ENCODE measurements at regions of chr11 and their contacts with region 1.

Region 1: DNA sequence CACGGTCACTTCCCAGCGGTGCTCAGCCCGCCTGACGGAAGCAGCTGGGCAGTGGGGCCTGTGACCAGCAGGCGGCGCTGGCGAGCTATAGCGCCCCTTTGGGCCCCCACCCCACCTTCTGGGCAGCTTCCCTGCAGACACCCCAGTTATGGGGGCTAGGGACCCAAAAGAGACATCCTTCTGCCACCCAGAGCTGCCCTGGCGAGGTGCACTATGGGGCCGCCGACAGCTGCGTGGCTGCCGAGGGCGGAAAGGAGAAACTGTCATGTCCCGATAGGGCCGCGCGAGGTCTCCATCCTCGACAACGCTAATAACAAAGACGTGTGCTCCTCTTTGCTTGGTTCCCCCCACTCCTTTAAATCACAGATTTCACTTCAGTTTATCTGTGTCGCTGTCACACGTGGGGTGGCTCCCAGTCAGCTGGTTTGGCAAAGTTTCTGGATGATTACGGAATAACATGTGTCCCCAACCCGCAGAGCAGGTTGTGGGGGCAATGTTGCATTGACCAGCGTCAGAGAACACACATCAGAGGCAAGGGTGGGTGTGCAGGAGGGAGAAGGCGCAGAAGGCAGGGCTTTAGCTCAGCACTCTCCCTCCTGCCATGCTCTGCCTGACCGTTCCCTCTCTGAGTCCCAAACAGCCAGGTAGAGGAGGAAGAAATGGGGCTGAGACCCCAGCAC is 674 bp upstream of the MYO7A start:
- DNase-seq: peak; percentile 62 to 74
- ATAC-seq: peak; percentile 65 to 86 (median 83)
- H3K4me3 ChIP-seq: peak overlapping the region; percentile 24
- H3K4me3 Mint-ChIP-seq: no peak overlapping the region
- H3K27ac ChIP-seq: no peak overlapping the region
- H3K27ac Mint-ChIP-seq: no peak overlapping the region
- H3K4me1 ChIP-seq: peaks cover 17% of the 10 kb centered on the region
- H3K4me1 Mint-ChIP-seq: peaks cover 0 to 16% of the 10 kb centered on the region in 2 donors
- H3K27me3 ChIP-seq: peaks cover 11% of the 10 kb centered on the region
- H3K27me3 Mint-ChIP-seq: peaks cover 9 to 12% of the 10 kb centered on the region in 2 donors
- CTCF ChIP-seq: peak; percentile 96

Region 2: DNA sequence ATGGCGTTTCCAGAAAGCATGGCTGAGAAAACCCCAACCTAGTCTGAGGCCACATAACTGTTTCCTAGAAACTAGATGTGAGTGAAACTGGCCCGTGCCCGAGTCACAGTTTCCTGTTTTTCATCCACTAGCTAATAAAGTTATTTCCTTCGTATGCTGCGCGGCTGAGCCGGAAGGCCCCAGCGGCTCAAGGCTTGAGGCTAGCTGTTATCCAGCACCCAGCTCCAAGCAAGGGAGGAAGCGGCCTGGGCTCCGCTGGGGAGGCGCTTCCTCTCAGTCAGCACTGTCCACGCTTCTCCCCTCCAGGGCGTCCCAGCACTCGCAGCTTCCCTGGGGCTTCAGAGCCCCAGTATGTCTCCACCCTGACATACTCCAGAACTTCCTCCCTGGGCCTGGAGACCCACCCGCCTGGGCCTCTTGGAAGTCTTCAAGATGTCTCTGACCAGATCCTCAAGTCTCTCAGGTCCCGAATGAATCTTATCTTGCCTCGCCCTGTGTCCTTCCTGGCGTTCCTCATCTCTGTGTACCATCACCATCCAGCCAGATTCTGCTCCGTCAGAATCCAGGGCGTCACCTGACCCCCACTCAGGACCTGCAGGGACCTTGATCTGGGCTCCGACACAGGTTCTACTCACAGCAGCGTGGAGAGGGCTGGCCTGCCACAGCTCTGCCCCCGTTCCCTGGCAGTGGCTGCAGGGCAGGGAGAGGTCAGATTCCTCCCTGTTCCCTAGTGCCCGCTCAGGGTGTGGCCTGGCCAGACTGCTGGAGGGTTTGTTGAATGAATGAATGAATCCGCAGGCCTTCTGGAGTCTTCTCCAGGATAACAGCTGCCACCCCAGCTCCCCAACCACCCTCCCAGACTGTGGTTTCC is 538.7 kb before region 1 on chr11:
- intact Hi-C with region 1: no loop called
- DNase-seq: peak in 1 of 2 donors; percentile 29
- ATAC-seq: peak in 2 of 3 donors; percentile 31 to 57
- H3K4me3 ChIP-seq: no peak overlapping the region
- H3K4me3 Mint-ChIP-seq: no peak overlapping the region
- H3K27ac ChIP-seq: no peak overlapping the region
- H3K27ac Mint-ChIP-seq: peak overlapping the region in 1 of 2 donors; percentile 62
- H3K4me1 ChIP-seq: peaks cover 10% of the 10 kb centered on the region
- H3K4me1 Mint-ChIP-seq: peaks cover 5 to 10% of the 10 kb centered on the region in 2 donors
- H3K27me3 ChIP-seq: no peaks in the 10 kb centered on the region
- H3K27me3 Mint-ChIP-seq: peaks cover 0 to 2% of the 10 kb centered on the region in 2 donors
- CTCF ChIP-seq: no peak

Region 3: GRCh38 chr11:76835928-76836612 is 291.3 kb before region 1 on chr11:
- intact Hi-C with region 1: no loop called
- DNase-seq: no peak
- ATAC-seq: no peak
- H3K4me3 ChIP-seq: no peak overlapping the region
- H3K4me3 Mint-ChIP-seq: no peak overlapping the region
- H3K27ac ChIP-seq: no peak overlapping the region
- H3K27ac Mint-ChIP-seq: no peak overlapping the region
- H3K4me1 ChIP-seq: no peaks in the 10 kb centered on the region
- H3K4me1 Mint-ChIP-seq: no peaks in the 10 kb centered on the region
- H3K27me3 ChIP-seq: no peaks in the 10 kb centered on the region
- H3K27me3 Mint-ChIP-seq: peaks cover 14 to 38% of the 10 kb centered on the region in 2 donors
- CTCF ChIP-seq: no peak

Region 4: GRCh38 chr11:77619576-77620198 is 492.3 kb after region 1 on chr11:
- intact Hi-C with region 1: loop called (anchors 2 kb)
- DNase-seq: peak in 1 of 2 donors; percentile 69
- ATAC-seq: peak in 1 of 3 donors; percentile 40
- H3K4me3 ChIP-seq: no peak overlapping the region
- H3K4me3 Mint-ChIP-seq: no peak overlapping the region
- H3K27ac ChIP-seq: no peak overlapping the region
- H3K27ac Mint-ChIP-seq: no peak overlapping the region
- H3K4me1 ChIP-seq: no peaks in the 10 kb centered on the region
- H3K4me1 Mint-ChIP-seq: no peaks in the 10 kb centered on the region
- H3K27me3 ChIP-seq: no peaks in the 10 kb centered on the region
- H3K27me3 Mint-ChIP-seq: no peaks in the 10 kb centered on the region
- CTCF ChIP-seq: peak; percentile 67